ENCODE measurements at regions of chr11 and their contacts with region 1.

Region 1: DNA sequence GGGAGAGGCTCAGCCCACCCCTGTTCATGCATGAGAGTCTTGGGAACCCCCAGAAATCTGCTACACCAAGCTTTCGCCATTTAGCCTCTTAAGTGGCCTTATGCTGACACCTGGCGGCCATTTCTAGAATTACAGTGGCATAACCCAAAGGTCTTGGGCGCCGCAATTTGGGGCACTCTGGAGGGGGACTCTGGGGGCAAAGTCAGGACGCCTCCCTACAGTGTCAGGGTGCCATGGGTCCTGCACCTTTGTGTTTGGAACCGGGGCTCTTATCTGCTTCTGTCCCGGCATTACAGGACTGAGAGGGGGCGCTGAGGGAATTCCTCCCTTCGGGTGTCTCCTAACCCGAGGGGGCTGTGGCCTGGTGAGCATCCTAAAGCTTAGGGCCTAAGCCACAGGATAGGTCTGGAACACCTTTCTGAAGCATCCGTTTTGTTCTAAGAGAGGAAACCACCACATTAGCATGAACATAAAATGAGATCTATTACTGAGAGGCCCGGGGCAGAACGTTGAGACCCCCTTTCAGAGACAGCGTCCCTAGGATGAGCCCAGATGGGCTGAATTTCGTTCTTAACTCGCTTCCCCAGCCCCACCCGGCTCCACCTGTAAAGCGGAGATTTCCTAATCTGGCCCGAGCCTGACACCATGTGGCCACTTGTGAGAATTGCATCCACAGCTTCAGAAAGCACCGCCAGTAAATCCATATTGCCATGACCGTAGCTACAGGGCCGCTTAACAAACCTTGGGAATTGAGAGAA is 9.3 kb downstream of the INS start:
- DNase-seq: peak; percentile 88
- CTCF ChIP-seq: peak; percentile 87

Region 2: DNA sequence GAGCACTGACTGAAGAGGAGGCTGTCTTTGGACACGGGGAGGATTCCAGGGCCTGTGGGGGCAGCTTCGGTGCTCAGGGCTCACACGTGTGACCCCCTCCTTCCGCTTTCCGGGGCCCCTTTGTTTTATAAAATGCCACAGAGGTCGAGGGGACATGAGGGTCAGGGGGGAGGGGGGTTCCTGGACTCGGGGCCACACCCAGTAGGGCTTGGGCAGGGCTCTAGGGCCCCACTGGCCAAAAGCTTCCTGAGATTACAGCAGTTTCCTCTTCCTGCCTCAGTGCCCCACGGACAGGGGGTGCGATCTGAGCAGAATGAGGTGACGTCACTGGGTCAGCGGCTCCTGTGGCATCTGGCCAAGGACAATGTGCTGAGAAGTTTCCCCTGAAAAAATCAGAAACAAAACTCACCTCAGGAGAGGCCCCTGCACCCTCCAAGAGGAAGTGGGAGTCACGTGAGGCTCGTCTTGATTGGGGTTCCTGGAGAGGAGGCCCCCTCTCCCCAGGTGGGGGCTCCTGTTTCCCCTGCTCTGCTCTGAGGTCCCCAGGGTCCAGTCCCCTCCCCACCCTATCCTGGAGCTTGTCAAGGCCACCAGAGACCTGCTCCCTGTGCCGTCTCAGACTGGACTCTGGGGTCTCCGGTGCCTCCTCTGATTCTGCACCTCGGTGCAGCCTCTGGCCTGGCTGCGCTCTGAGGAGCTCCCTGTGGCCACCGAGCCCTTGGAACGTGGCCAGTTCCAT is 1824.7 kb before region 1 on chr11:
- in situ Hi-C with region 1: no loop called
- DNase-seq: peak; percentile 88
- CTCF ChIP-seq: no peak

Region 3: GRCh38 chr11:1652771-1653540 is 498.7 kb before region 1 on chr11:
- in situ Hi-C with region 1: loop called (anchors 25 kb)
- DNase-seq: peak; percentile 93
- CTCF ChIP-seq: peak; percentile 92

Region 4: DNA sequence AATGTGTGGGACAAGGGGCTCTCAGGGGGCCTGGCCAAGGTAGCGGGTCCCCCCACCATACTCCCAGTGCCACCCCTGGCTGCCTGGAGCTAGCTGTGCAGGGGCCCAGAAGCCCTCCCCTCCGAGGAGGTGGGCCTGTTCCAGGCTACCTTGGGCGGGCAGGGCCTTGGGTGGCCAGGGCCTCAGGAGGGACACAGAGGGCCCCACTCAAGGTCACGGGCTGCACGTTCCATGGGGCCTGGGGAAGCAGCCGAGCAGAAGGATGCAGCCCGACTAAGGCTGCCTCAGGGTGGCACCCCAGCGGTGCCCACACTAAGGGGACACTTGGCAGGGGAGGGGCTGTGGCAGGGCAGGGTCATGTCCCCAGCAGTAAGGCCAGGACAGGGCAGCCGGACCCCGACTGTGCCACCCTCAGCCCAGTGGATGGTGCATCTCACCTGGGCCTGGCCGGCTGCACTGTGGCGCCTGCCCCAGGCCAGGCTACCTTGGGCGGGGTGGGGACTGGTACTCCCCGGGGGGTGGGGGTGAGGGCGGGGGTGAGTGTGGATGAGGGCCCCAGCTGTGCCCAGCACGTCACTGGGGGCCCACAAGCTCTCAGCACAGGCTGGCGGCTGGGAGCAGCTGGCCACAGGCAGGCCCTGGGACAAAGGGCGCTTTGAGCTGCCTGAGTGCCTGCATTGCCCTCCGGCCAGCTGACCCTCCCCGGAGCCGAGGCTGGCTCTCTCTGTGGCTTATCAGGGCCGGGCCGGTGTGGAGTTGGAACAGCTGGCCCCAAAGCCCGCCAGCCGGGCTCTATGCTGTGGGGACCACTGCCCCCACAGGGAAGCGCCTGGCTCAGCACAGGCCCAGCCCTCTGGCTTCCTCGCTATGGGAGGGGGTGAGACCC is 410.3 kb after region 1 on chr11:
- in situ Hi-C with region 1: no loop called
- DNase-seq: no peak
- CTCF ChIP-seq: no peak